Dendritic cell treated with granulocyte-macrophage colony-stimulating factor and Interleukin-4, amounts not matched to agents 40 ng/mL and 50 ng/mL, for 4 days (primary cell): ENCODE measurements at regions of chr18 and their contacts with region 1.

Region 1: GRCh38 chr18:23053776-23054457 is 81.4 kb upstream of the CABLES1 start:
- H3K4me3 Mint-ChIP-seq: peak overlapping the region; percentile 50
- H3K27ac Mint-ChIP-seq: peak overlapping the region; percentile 77
- H3K4me1 Mint-ChIP-seq: peaks cover 43% of the 10 kb centered on the region
- H3K27me3 Mint-ChIP-seq: peaks cover 20% of the 10 kb centered on the region

Region 2: GRCh38 chr18:22674272-22674671 is 379.6 kb before region 1 on chr18:
- intact Hi-C with region 1: no loop called
- H3K4me3 Mint-ChIP-seq: no peak overlapping the region
- H3K27ac Mint-ChIP-seq: no peak overlapping the region
- H3K4me1 Mint-ChIP-seq: peaks cover 6% of the 10 kb centered on the region
- H3K27me3 Mint-ChIP-seq: no peaks in the 10 kb centered on the region

Region 3: GRCh38 chr18:22999212-22999611 is 54.7 kb before region 1 on chr18:
- intact Hi-C with region 1: no loop called
- H3K4me3 Mint-ChIP-seq: no peak overlapping the region
- H3K27ac Mint-ChIP-seq: no peak overlapping the region
- H3K4me1 Mint-ChIP-seq: no peaks in the 10 kb centered on the region
- H3K27me3 Mint-ChIP-seq: no peaks in the 10 kb centered on the region

Region 4: GRCh38 chr18:23069481-23069880 is 15.6 kb after region 1 on chr18:
- intact Hi-C with region 1: loop called (anchors 2 kb)
- H3K4me3 Mint-ChIP-seq: no peak overlapping the region
- H3K27ac Mint-ChIP-seq: peak overlapping the region; percentile 35
- H3K4me1 Mint-ChIP-seq: peaks cover 56% of the 10 kb centered on the region
- H3K27me3 Mint-ChIP-seq: no peaks in the 10 kb centered on the region

Region 5: DNA sequence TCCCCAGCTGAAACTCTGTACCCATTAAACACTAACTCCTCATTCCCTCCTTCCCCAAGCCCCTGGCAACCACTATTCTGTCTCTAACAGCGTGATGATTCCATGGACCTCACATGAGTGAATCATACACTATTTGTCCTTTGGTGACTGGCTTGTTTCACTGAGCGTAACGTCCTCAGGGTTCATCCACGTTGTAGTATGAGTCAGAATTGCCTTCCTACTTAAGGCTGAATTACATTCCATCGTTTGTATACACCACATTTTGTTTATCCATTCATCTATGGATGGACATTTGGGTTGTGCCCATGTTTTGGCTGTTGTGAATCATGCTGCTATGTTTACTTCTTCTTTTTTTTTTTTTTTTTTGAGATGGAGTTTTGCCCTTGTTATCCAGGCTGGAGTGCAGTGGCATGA is 61.8 kb after region 1 on chr18:
- intact Hi-C with region 1: loop called (anchors 10 kb)
- H3K4me3 Mint-ChIP-seq: no peak overlapping the region
- H3K27ac Mint-ChIP-seq: no peak overlapping the region
- H3K4me1 Mint-ChIP-seq: peaks cover 9% of the 10 kb centered on the region
- H3K27me3 Mint-ChIP-seq: peaks cover 45% of the 10 kb centered on the region

Region 6: GRCh38 chr18:23635283-23636070 is 581.6 kb after region 1 on chr18:
- intact Hi-C with region 1: no loop called
- H3K4me3 Mint-ChIP-seq: no peak overlapping the region
- H3K27ac Mint-ChIP-seq: no peak overlapping the region
- H3K4me1 Mint-ChIP-seq: peaks cover 10% of the 10 kb centered on the region
- H3K27me3 Mint-ChIP-seq: peaks cover 10% of the 10 kb centered on the region